ENCODE measurements at regions of chr2 and their contacts with region 1.

Region 1: DNA sequence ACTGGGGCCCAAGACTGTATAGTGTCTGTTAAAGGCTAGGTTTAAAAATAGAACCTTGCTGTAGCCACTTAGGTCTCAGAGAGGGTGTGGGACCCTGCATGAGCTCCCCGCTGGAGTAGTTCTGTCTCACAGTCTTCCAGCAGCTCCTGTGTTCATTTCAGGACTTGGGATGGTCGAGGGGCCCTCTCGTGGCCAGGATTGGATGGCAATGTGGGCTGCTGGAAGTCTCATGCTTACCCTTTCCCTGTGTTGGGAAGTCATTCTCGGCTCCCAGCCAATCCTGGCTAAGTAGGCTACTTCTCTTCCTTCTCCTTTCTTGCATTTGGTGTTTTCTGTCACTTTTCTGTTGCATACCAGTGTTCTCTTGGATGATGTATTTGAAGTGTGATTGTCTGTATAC is 284.0 kb upstream of the GCFC2 start:
- DNase-seq: peak; percentile 35
- ATAC-seq: peak; percentile 98
- H3K4me3 ChIP-seq: no peak overlapping the region
- H3K27ac ChIP-seq: no peak overlapping the region
- H3K4me1 ChIP-seq: no peaks in the 10 kb centered on the region
- H3K27me3 ChIP-seq: no peaks in the 10 kb centered on the region
- CTCF ChIP-seq: peak; percentile 70
- EP300 ChIP-seq: no peak
- POLR2A ChIP-seq: no peak
- RAD21 ChIP-seq: no peak

Region 2: DNA sequence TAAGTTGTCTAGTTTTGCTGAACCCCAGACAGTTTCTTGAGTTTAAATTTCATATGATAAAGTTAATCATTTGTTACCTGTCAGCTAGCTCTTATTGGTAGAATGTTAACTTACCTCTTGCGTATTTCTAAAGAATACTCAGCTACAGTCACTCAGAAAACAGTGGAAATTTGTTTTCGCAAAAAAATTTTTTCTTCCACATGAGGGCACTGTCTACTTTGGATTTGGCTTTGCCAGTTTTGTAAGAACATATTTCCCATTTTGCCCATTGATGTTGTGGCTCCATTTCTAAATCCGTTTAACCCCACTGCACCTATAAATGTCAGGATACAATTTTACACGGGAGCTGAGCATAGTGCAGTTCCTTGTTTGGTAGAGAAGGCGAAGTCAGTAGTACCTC is 264.9 kb before region 1 on chr2:
- CTCF ChIA-PET with region 1: no interaction called
- POLR2A ChIA-PET with region 1: no interaction called
- in situ Hi-C with region 1: no loop called
- intact Hi-C with region 1: loop called (anchors 5 kb)
- DNase-seq: peak; percentile 12
- ATAC-seq: 0 out of 3 replicates have a peak, but pooled peaks have one; percentile 36
- H3K4me3 ChIP-seq: no peak overlapping the region
- H3K27ac ChIP-seq: no peak overlapping the region
- H3K4me1 ChIP-seq: no peaks in the 10 kb centered on the region
- H3K27me3 ChIP-seq: 0 out of 5 replicates have a peak, but pooled peaks cover 0 to 6% of the 10 kb centered on the region in 2 experiments
- CTCF ChIP-seq: peak; percentile 60
- EP300 ChIP-seq: no peak
- POLR2A ChIP-seq: no peak
- RAD21 ChIP-seq: no peak

Region 3: DNA sequence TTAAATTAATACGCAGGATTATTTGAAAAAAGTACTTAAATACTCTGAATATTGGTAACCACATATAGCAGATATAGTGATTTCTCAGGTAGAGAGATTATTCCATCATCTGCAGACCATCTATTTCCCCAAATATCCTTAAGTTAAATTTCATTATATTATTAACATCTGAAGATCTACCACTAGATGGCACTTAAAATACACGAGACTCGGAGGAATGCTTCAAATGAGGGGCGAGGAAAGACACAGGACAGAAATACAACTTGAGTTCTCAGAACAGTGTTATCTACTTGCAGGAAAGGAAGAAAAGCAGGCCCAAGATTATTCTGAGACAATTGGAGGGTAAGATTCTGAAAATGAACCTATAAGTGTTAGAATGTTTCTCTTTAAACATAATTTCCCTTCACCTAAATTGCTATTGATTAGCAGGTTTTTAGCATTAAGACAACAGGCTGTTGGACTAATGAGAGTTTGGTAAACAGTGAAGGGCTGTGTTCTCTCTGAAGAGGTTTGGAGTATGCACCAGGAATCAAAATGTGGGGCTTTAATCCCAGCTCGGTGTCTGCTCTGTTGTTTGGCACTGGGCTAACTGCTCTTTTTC is 207.1 kb before region 1 on chr2:
- CTCF ChIA-PET with region 1: interaction called, 3 read pairs
- POLR2A ChIA-PET with region 1: no interaction called
- in situ Hi-C with region 1: no loop called
- intact Hi-C with region 1: loop called (anchors 1 kb)
- DNase-seq: peak; percentile 44
- ATAC-seq: peak; percentile 81
- H3K4me3 ChIP-seq: no peak overlapping the region
- H3K27ac ChIP-seq: no peak overlapping the region
- H3K4me1 ChIP-seq: no peaks in the 10 kb centered on the region
- H3K27me3 ChIP-seq: peaks cover 0 to 2% of the 10 kb centered on the region in 2 experiments; a peak in 1 of 5 replicates
- CTCF ChIP-seq: peak; percentile 70
- EP300 ChIP-seq: no peak
- POLR2A ChIP-seq: no peak
- RAD21 ChIP-seq: 0 out of 2 replicates have a peak, but pooled peaks have one; percentile 26

Region 4: GRCh38 chr2:75960134-75961009 is 34.4 kb before region 1 on chr2:
- CTCF ChIA-PET with region 1: no interaction called
- POLR2A ChIA-PET with region 1: no interaction called
- in situ Hi-C with region 1: no loop called
- intact Hi-C with region 1: no loop called
- DNase-seq: no peak
- ATAC-seq: no peak
- H3K4me3 ChIP-seq: no peak overlapping the region
- H3K27ac ChIP-seq: no peak overlapping the region
- H3K4me1 ChIP-seq: no peaks in the 10 kb centered on the region
- H3K27me3 ChIP-seq: no peaks in the 10 kb centered on the region
- CTCF ChIP-seq: no peak
- EP300 ChIP-seq: no peak
- POLR2A ChIP-seq: no peak
- RAD21 ChIP-seq: no peak

Region 5: GRCh38 chr2:76731157-76731556 is 736.4 kb after region 1 on chr2:
- CTCF ChIA-PET with region 1: no interaction called
- POLR2A ChIA-PET with region 1: no interaction called
- in situ Hi-C with region 1: no loop called
- intact Hi-C with region 1: no loop called
- DNase-seq: no peak
- ATAC-seq: no peak
- H3K4me3 ChIP-seq: no peak overlapping the region
- H3K27ac ChIP-seq: no peak overlapping the region
- H3K4me1 ChIP-seq: no peaks in the 10 kb centered on the region
- H3K27me3 ChIP-seq: no peaks in the 10 kb centered on the region; a peak in 1 of 5 replicates
- CTCF ChIP-seq: no peak
- EP300 ChIP-seq: no peak
- POLR2A ChIP-seq: no peak
- RAD21 ChIP-seq: no peak